H1 (cell line): ENCODE measurements at regions of chr3 and their contacts with region 1.

Region 1: GRCh38 chr3:42961633-42962032 is 17.5 kb upstream of the GASK1A start:
- DNase-seq: peak in 1 of 2 experiments; percentile 47
- H3K4me3 ChIP-seq: no peak overlapping the region
- H3K27ac ChIP-seq: no peak overlapping the region
- H3K4me1 ChIP-seq: no peaks in the 10 kb centered on the region
- H3K27me3 ChIP-seq: no peaks in the 10 kb centered on the region
- CTCF ChIP-seq: peak in 2 of 3 experiments; percentile 70 to 71; a peak in 3 of 4 replicates
- EP300 ChIP-seq: no peak
- POLR2A ChIP-seq: no peak
- RAD21 ChIP-seq: peak; percentile 85 to 88

Region 2: DNA sequence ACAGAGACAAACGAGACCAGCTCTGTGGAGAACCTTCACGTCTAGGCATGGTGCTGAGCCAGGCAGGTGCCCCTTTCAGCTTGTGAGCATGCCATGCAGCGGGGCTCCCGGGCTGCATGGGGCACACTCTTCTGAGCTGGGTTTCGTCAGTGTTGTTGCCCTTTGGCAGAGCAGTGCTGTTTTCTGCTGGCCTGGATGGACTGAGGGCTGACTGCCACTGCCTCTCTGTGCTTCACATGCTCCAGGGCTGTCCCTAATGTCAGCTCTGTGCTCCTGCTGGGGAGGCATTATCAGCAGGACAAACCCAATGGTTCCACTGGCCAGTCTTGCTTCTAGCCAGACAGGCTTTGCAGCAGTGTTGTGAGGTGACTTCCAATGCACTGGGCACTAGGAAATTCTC is 26.9 kb after region 1 on chr3:
- CTCF ChIA-PET with region 1: interaction called, 51 read pairs
- POLR2A ChIA-PET with region 1: interaction called, 3 read pairs
- DNase-seq: no peak
- H3K4me3 ChIP-seq: no peak overlapping the region
- H3K27ac ChIP-seq: no peak overlapping the region
- H3K4me1 ChIP-seq: peaks cover 4 to 37% (median 18%) of the 10 kb centered on the region in 4 experiments
- H3K27me3 ChIP-seq: no peaks in the 10 kb centered on the region
- CTCF ChIP-seq: no peak
- EP300 ChIP-seq: no peak
- POLR2A ChIP-seq: no peak
- RAD21 ChIP-seq: no peak

Region 3: GRCh38 chr3:43035801-43036365 is 74.2 kb after region 1 on chr3:
- CTCF ChIA-PET with region 1: interaction called, 15 read pairs
- POLR2A ChIA-PET with region 1: no interaction called
- DNase-seq: no peak
- H3K4me3 ChIP-seq: no peak overlapping the region
- H3K27ac ChIP-seq: no peak overlapping the region
- H3K4me1 ChIP-seq: no peaks in the 10 kb centered on the region
- H3K27me3 ChIP-seq: no peaks in the 10 kb centered on the region
- CTCF ChIP-seq: no peak
- EP300 ChIP-seq: no peak
- POLR2A ChIP-seq: no peak
- RAD21 ChIP-seq: no peak

Region 4: GRCh38 chr3:43087249-43087776 is 125.7 kb after region 1 on chr3:
- CTCF ChIA-PET with region 1: interaction called, 27 read pairs
- POLR2A ChIA-PET with region 1: no interaction called
- DNase-seq: no peak
- H3K4me3 ChIP-seq: no peak overlapping the region
- H3K27ac ChIP-seq: no peak overlapping the region
- H3K4me1 ChIP-seq: no peaks in the 10 kb centered on the region
- H3K27me3 ChIP-seq: no peaks in the 10 kb centered on the region
- CTCF ChIP-seq: peak in 1 of 3 experiments; percentile 19; a peak in 1 of 4 replicates
- EP300 ChIP-seq: no peak
- POLR2A ChIP-seq: no peak
- RAD21 ChIP-seq: peak; percentile 19 to 43; a peak in 3 of 4 replicates

Region 5: GRCh38 chr3:43128464-43128863 is 166.8 kb after region 1 on chr3:
- CTCF ChIA-PET with region 1: interaction called, 12 read pairs
- POLR2A ChIA-PET with region 1: no interaction called
- DNase-seq: no peak
- H3K4me3 ChIP-seq: no peak overlapping the region
- H3K27ac ChIP-seq: no peak overlapping the region
- H3K4me1 ChIP-seq: no peaks in the 10 kb centered on the region
- H3K27me3 ChIP-seq: no peaks in the 10 kb centered on the region
- CTCF ChIP-seq: no peak
- EP300 ChIP-seq: no peak
- POLR2A ChIP-seq: no peak
- RAD21 ChIP-seq: no peak

Region 6: GRCh38 chr3:43223670-43224364 is 262.2 kb after region 1 on chr3:
- CTCF ChIA-PET with region 1: no interaction called
- POLR2A ChIA-PET with region 1: no interaction called
- DNase-seq: no peak
- H3K4me3 ChIP-seq: no peak overlapping the region
- H3K27ac ChIP-seq: no peak overlapping the region
- H3K4me1 ChIP-seq: no peaks in the 10 kb centered on the region
- H3K27me3 ChIP-seq: no peaks in the 10 kb centered on the region
- CTCF ChIP-seq: peak in 1 of 3 experiments; percentile 4; a peak in 1 of 4 replicates
- EP300 ChIP-seq: no peak
- POLR2A ChIP-seq: no peak
- RAD21 ChIP-seq: peak in 1 of 2 experiments; percentile 58